Left ventricle myocardium inferior (tissue), 1 donor: ENCODE measurements at regions of chr15 and their contacts with region 1.

Region 1: DNA sequence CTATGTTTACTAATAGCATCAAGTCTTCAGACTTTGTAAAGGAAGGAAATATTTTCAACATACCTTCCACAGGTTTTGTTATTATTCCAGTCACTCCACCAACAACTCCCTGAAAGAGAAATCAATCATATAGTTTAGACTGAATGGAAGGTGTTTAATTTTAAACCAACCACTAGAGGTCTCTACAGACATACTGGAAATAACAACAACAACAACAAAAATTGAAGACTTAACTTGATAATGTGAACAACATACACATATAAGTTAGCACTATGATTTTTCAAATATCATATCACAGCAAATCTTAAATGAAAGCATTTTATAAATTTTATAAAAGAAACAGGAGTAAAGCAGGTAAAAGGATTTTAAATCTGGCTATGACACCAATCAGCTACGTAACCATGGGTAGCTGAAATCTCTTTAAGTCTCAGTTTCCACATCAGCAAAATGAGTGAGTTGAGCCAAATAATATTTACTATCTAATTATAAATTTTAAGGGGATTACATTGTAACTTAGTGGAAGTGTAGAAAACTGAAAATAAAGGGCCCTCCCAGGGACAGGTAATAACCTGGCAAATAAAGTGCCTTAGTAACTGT is 188.2 kb downstream of the VPS13C start:
- DNase-seq: no peak
- H3K4me3 ChIP-seq: no peak overlapping the region
- H3K27ac ChIP-seq: no peak overlapping the region
- H3K4me1 ChIP-seq: no peaks in the 10 kb centered on the region
- H3K27me3 ChIP-seq: no peaks in the 10 kb centered on the region
- CTCF ChIP-seq: peak; percentile 65

Region 2: GRCh38 chr15:62306851-62307504 is 435.0 kb after region 1 on chr15:
- intact Hi-C with region 1: loop called (anchors 10 kb)
- DNase-seq: peak; percentile 32
- H3K4me3 ChIP-seq: no peak overlapping the region
- H3K27ac ChIP-seq: no peak overlapping the region
- H3K4me1 ChIP-seq: peaks cover 12% of the 10 kb centered on the region
- H3K27me3 ChIP-seq: no peaks in the 10 kb centered on the region
- CTCF ChIP-seq: peak; percentile 80